ENCODE measurements at regions of chr6 and their contacts with region 1.

Region 1: DNA sequence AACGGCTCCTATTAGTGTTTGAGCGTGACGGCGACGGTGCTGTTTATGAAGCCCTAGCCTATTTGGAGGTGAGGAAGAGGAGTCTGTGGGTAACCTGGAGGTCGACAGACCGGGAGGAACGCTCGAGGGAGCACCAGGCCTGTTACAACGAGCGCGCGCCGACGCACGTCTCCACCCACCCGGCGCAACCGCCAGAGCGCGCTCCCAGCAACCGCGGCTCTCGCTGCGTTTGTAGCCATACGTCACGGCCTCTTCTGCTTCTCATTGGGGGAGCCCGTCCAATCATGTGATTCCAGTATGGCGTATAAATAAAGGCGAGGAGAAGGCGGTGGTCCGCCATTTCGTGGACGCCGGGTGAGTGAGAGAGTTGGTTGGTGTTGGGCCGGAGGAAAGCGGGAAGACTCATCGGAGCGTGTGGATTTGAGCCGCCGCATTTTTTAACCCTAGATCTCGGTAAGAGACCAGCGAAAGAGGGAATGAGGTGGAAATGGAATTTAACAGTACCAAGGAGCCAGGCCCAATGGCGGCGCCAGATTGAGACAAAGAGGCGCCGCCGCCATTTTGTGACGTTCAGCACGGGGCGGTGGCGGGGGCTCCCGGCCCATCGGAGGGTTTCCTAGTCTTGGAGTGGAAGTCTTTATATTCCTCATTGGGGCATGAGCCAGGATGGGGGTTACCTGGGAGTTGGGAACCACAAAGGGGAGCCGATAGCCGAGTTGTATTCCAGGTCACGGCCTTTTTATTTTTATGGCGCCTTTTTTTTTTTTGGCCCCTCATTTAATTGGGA is at the start of gene SRSF3:
- DNase-seq: peak; percentile 96 to 97
- ATAC-seq: peak; percentile 97 to 98 (median 98)
- H3K4me3 ChIP-seq: peak within 1 kb of the TSS; percentile 48 to 89 (median 73)
- H3K27ac ChIP-seq: peak within 1 kb of the TSS; percentile 89 to 99 (median 98)
- H3K4me1 ChIP-seq: peaks cover 13 to 44% (median 37%) of the 10 kb centered on the region in 9 donors
- H3K27me3 ChIP-seq: no peaks in the 10 kb centered on the region
- CTCF ChIP-seq: peak; percentile 36 to 81 (median 62)
- total RNA-seq, gene SRSF3: 105 to 196 (median 131) TPM

Region 2: GRCh38 chr6:36423101-36423824 is 171.0 kb before region 1 on chr6:
- intact Hi-C with region 1: loop called in 3 of 10 experiments (anchors 5 to 10 kb)
- DNase-seq: peak; percentile 98 to 99
- ATAC-seq: peak; percentile 100
- H3K4me3 ChIP-seq: peak overlapping the region; percentile 15 to 67 (median 57)
- H3K27ac ChIP-seq: peak overlapping the region; percentile 3 to 85 (median 68)
- H3K4me1 ChIP-seq: peaks cover 0 to 15% (median 8%) of the 10 kb centered on the region in 9 donors
- H3K27me3 ChIP-seq: no peaks in the 10 kb centered on the region
- CTCF ChIP-seq: peak in 8 of 9 donors; percentile 58 to 81 (median 66)

Region 3: DNA sequence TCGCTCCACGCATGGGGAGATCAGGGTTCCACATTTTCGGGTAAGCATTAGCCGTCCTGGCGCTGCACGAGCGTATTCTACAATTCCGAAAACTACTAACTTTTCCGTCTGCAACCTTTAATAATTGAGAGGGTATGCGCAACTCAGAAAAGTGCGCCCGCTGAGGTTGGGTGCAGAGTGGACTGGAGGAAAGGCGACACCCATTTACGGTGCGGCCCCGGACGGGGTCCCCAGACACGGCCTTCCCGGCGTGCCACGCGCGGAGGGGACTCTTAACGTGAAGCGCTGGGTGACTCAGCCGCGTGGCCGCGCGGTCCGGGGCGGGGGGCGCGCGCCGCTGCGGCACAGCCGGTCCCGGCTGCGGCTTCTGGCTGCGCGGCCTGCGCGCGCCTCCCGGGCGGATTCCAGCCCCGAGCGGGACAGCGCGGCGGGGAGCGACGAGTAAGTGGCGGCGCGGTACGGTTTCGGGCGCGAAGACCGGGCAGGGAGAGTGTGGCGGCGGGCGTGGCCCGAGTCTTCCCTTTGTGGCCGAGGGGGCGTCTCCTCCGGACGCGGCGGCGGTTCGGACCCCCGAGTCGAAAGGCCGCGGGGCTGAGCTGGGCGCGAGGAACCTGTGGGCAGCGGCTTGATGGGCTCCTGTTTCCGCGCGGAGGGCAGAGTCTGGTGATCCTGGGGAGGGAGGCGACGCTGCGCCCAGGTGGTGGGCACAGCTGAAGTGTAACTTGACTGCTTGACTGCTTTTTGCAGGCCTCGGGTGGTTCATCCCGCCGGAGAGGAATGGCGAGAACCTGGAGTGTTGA is 151.4 kb before region 1 on chr6 and contains the starts of genes KCTD20 and PXT1:
- intact Hi-C with region 1: loop called in 5 of 10 experiments (anchors 5 to 10 kb)
- DNase-seq: peak; percentile 89 to 91
- ATAC-seq: peak; percentile 88 to 96 (median 93)
- H3K4me3 ChIP-seq: peak within 1 kb of the TSS; percentile 74 to 98 (median 94)
- H3K27ac ChIP-seq: peak within 1 kb of the TSS; percentile 96 to 100 (median 98)
- H3K4me1 ChIP-seq: peaks cover 8 to 51% (median 42%) of the 10 kb centered on the region in 9 donors
- H3K27me3 ChIP-seq: no peaks in the 10 kb centered on the region
- CTCF ChIP-seq: peak in 1 of 9 donors; percentile 2
- total RNA-seq, gene KCTD20: 21.4 to 36.6 (median 26.1) TPM
- total RNA-seq, gene PXT1: 0.18 to 0.34 (median 0.23) TPM in 5 of 10 donors, not detected in the others

Region 4: DNA sequence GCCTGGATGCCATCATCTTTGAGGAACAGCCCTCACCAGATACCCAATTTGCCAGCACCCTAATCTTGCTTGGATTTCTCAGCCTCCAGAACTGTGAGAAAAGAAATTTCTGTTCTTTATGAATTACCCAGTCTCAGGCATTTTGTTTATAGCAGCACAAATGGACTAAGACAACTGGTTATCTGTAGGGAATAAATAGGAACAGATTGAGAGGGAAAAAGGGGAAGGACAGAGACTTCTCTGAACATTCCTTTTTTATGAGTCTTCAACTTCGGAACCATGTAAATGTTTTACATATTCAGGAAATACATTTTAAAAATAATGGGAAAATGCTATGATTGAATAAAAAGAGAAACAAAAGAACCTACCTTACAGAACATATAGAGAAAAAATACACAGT is 130.5 kb before region 1 on chr6:
- intact Hi-C with region 1: no loop called
- DNase-seq: no peak
- ATAC-seq: no peak
- H3K4me3 ChIP-seq: no peak overlapping the region
- H3K27ac ChIP-seq: no peak overlapping the region
- H3K4me1 ChIP-seq: peaks cover 2 to 32% (median 26%) of the 10 kb centered on the region in 9 donors
- H3K27me3 ChIP-seq: no peaks in the 10 kb centered on the region
- CTCF ChIP-seq: no peak

Region 5: GRCh38 chr6:36493859-36494258 is 100.4 kb before region 1 on chr6:
- intact Hi-C with region 1: no loop called
- DNase-seq: no peak
- ATAC-seq: peak in 1 of 8 donors; percentile 39
- H3K4me3 ChIP-seq: no peak overlapping the region
- H3K27ac ChIP-seq: peak overlapping the region in 1 of 10 donors; percentile 77
- H3K4me1 ChIP-seq: peaks cover 0 to 30% (median 6%) of the 10 kb centered on the region in 9 donors
- H3K27me3 ChIP-seq: no peaks in the 10 kb centered on the region
- CTCF ChIP-seq: no peak

Region 6: DNA sequence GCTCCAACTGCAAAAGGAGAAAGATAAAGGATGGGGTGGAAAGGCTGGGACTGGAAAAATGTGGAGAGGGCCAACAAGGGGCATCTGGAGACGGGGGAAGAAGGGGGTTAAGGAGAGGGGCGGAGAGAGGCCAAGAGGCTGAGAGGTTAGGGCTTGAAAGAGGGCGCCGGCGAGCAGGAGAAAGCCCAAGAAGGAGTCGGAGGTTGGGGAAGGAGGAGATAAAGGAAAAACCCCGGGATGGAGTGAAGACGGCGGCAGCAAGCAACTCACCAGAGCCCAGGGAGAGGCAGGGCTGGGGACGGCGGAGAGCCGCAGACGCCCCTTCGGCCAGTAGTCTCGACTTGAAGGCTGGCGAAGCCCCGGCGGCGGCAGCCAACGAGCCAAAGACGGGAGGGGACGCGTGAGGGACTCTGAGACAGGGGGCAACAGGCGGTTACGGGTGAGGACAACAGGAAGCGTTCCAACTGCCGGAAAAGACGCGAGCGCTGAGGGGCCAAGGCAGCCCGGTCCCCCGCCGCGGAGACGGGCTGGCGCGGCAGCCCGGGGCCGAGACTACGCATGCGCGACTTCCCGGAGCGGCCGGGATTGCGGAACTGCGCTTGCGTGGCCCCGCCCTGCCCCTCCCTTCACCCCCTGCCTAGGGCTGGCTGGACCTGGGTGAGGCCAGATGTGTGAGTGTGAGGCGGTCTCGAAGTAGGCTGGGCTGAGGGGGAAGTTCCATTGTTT is 47.1 kb before region 1 on chr6 and contains the start of gene STK38:
- intact Hi-C with region 1: loop called in 8 of 10 experiments (anchors 1 to 10 kb)
- DNase-seq: peak; percentile 93 to 96
- ATAC-seq: peak; percentile 95 to 99 (median 96)
- H3K4me3 ChIP-seq: peak within 1 kb of the TSS; percentile 77 to 98 (median 93)
- H3K27ac ChIP-seq: peak within 1 kb of the TSS; percentile 89 to 100 (median 98)
- H3K4me1 ChIP-seq: peaks cover 5 to 52% (median 39%) of the 10 kb centered on the region in 9 donors
- H3K27me3 ChIP-seq: no peaks in the 10 kb centered on the region
- CTCF ChIP-seq: peak in 4 of 9 donors; percentile 8 to 33 (median 29)
- total RNA-seq, gene STK38: 13.2 to 23.8 (median 21.5) TPM

Measured in heart right ventricle (tissue), 16 donors.